Uterus (tissue), 4 donors: ENCODE measurements at regions of chr6 and their contacts with region 1.

Region 1: DNA sequence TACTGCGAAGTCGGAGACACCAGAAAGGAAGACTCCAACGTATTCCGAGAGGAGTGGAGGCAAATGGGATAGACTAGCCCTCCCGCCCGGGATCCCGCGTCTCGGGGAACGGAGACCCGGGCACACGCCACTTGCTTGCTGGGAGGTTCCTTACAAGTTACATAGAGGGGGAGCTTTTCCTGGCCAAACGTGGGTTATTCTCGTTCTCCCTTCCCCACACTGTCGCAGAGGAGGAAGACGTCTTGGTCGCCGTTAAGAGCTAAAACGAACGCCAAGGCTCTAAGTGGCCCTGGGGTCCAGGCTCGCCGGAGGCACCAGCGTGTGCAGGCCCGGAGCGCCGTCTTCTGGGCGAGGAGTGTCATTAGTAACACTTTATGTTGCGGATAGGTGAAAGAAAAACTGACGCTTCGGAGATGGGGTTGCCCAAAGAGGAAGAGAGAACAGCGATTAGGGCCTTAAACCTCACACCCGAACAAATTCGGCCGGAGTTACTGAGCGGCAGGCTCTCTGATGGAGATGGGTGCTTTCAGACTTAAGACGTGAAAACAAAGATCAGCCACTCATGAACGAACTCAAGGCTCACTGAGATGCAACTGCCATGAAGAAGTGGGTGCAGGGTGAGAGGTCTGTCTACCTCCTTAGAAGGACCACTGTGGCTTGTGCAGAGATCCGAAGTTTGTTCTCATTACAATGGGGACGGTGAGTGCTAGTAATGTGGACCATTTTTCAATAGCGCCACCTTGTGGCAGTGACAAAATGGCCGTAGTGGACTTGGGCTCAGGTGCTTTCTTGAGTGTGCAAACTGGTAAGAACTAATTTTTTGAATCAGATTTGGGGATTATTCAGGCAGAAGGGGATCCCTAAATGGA is 11.7 kb upstream of the ZNF311 start:
- DNase-seq: peak; percentile 79 to 85
- H3K4me3 ChIP-seq: peak overlapping the region; percentile 37 to 51
- H3K27ac ChIP-seq: peak overlapping the region in 1 of 2 donors; percentile 53
- H3K4me1 ChIP-seq: no peaks in the 10 kb centered on the region
- H3K27me3 ChIP-seq: peaks cover 9 to 14% of the 10 kb centered on the region in 2 donors
- CTCF ChIP-seq: peak; percentile 69 to 78 (median 75)
- POLR2A ChIP-seq: no peak

Region 2: GRCh38 chr6:28838634-28839442 is 178.0 kb before region 1 on chr6:
- intact Hi-C with region 1: loop called (anchors 10 kb)
- DNase-seq: peak; percentile 77 to 81
- H3K4me3 ChIP-seq: peak overlapping the region; percentile 55 to 58
- H3K27ac ChIP-seq: peak overlapping the region; percentile 76 to 78
- H3K4me1 ChIP-seq: no peaks in the 10 kb centered on the region
- H3K27me3 ChIP-seq: peaks cover 0 to 9% of the 10 kb centered on the region in 2 donors
- CTCF ChIP-seq: peak; percentile 25 to 58 (median 39)
- POLR2A ChIP-seq: no peak

Region 3: GRCh38 chr6:28880894-28881780 is 135.7 kb before region 1 on chr6:
- intact Hi-C with region 1: no loop called
- DNase-seq: peak; percentile 78 to 81
- H3K4me3 ChIP-seq: peak overlapping the region; percentile 42 to 52
- H3K27ac ChIP-seq: peak overlapping the region; percentile 38 to 59
- H3K4me1 ChIP-seq: no peaks in the 10 kb centered on the region
- H3K27me3 ChIP-seq: no peaks in the 10 kb centered on the region
- CTCF ChIP-seq: no peak
- POLR2A ChIP-seq: no peak